Dendritic cell treated with granulocyte-macrophage colony-stimulating factor and Interleukin-4, amounts not matched to agents 40 ng/mL and 50 ng/mL, for 4 days (primary cell): ENCODE measurements at regions of chr15 and their contacts with region 1.

Region 1: GRCh38 chr15:32908135-32908801 is 190.5 kb downstream of the GREM1 start:
- H3K4me3 Mint-ChIP-seq: no peak overlapping the region
- H3K27ac Mint-ChIP-seq: peak overlapping the region; percentile 55
- H3K4me1 Mint-ChIP-seq: peaks cover 35% of the 10 kb centered on the region
- H3K27me3 Mint-ChIP-seq: no peaks in the 10 kb centered on the region

Region 2: GRCh38 chr15:32636908-32637567 is 271.2 kb before region 1 on chr15:
- intact Hi-C with region 1: no loop called
- H3K4me3 Mint-ChIP-seq: no peak overlapping the region
- H3K27ac Mint-ChIP-seq: no peak overlapping the region
- H3K4me1 Mint-ChIP-seq: peaks cover 6% of the 10 kb centered on the region
- H3K27me3 Mint-ChIP-seq: peaks cover 9% of the 10 kb centered on the region

Region 3: GRCh38 chr15:32867313-32867626 is 41.0 kb before region 1 on chr15:
- intact Hi-C with region 1: loop called (anchors 5 kb)
- H3K4me3 Mint-ChIP-seq: peak overlapping the region; percentile 4
- H3K27ac Mint-ChIP-seq: peak overlapping the region; percentile 81
- H3K4me1 Mint-ChIP-seq: peaks cover 34% of the 10 kb centered on the region
- H3K27me3 Mint-ChIP-seq: no peaks in the 10 kb centered on the region